Testis (tissue), 5 donors: ENCODE measurements at regions of chr4 and their contacts with region 1.

Region 1: DNA sequence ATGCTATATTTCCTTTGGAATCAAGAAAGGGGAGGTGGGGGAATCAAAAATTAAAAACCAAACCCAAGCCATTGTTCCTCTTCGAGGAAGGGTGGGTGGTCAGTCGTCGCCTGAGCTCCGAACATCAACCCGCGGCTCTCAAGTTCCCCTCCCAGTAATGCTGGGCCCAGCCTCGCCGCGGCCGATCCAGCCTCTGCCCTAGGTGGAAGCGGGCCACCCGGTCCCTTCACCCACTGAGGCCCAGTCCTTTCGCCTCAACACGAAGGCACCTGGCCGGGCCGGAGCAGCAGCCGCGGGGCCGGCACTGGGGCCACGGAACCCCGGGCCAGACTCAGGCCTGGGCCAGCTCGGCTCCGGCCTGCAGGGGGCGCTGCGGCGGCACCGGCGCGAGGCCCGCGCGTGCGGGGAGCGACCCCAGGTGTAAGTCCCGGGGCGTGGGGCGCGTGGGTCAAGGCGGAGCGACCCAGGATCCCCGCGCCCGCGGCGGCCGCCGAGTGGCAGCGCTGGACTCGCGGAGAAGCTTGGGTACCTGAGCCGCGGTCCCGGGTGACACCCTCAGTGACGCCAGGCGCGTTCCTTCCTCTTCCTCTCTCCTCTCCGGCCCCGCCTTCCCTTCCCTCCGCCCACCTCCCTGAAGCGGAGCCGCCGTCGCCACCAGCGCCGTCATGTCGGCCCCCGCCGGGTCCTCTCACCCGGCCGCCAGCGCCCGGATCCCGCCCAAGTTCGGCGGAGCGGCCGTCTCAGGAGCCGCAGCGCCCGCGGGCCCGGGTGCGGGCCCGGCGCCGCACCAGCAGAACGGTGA is at the start of gene SEC24B:
- DNase-seq: peak; percentile 93
- H3K4me3 ChIP-seq: peak within 1 kb of the TSS; percentile 68 to 83
- H3K27ac ChIP-seq: peak within 1 kb of the TSS; percentile 93 to 94
- H3K4me1 ChIP-seq: peaks cover 22% of the 10 kb centered on the region
- H3K27me3 ChIP-seq: no peaks in the 10 kb centered on the region
- CTCF ChIP-seq: peak; percentile 93 to 98 (median 94)
- POLR2A ChIP-seq: no peak
- total RNA-seq, gene SEC24B: 36.0 to 38.6 TPM

Region 2: DNA sequence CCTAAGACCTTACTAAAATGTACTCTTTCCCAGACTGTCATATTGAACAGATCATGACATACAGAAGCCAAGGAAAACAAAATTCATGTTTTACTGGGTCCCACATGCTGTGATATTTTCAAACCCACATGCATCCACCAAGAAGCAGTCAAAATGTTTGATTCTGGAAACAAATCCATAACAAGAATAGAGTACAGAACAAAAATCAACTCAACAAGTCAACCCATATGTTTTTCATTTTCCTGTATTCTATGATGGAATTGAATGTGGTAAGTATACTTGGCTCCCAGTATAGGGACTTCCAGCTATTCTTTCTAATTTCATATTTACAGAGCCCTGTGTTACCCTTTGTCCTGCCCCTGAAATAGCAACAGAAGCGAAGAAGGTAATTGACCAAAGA is 237.8 kb before region 1 on chr4:
- intact Hi-C with region 1: no loop called
- DNase-seq: no peak
- H3K4me3 ChIP-seq: no peak overlapping the region
- H3K27ac ChIP-seq: no peak overlapping the region
- H3K4me1 ChIP-seq: no peaks in the 10 kb centered on the region
- H3K27me3 ChIP-seq: no peaks in the 10 kb centered on the region
- CTCF ChIP-seq: no peak
- POLR2A ChIP-seq: no peak

Region 3: GRCh38 chr4:109559983-109560686 is 126.7 kb after region 1 on chr4 and contains the start of gene MCUB:
- intact Hi-C with region 1: loop called (anchors 10 kb)
- DNase-seq: peak; percentile 85
- H3K4me3 ChIP-seq: peak within 1 kb of the TSS; percentile 67 to 68
- H3K27ac ChIP-seq: peak within 1 kb of the TSS; percentile 59 to 85
- H3K4me1 ChIP-seq: no peaks in the 10 kb centered on the region
- H3K27me3 ChIP-seq: no peaks in the 10 kb centered on the region
- CTCF ChIP-seq: no peak
- POLR2A ChIP-seq: no peak
- total RNA-seq, gene MCUB: 20.1 to 23.4 TPM

Region 4: DNA sequence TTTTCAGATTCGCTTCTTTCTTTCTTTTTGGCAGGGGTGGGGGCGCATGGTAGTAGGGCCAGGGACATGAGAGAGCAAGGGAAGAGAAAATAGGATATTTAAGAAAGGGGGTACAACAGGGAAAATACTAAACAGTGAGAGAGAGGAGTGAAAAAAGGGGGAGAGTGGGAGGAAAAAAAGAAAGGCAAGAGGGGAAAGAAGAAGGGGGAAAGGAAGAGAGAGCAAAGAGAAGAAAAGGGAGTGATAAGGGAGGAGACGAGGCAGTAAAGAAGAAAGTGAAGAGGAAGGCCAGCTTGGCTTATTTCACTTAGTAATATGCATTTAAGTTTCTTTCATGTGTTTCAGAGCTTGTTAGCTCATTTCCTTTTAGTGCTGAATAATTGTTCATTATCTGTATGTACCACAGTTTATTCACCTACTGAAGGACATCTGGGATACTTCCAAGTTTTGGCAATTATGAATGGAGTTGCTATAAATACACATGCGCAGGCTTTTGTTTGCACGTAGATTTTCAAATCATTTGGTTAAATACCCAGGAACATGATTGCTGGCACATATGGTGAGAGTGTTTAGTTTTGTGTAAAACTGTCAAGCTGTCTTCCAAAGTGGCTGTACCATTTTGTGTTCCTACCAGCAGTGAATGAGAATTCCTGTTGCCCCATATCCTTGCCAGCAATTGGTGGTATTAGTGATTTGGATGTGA is 232.5 kb after region 1 on chr4:
- intact Hi-C with region 1: no loop called
- DNase-seq: no peak
- H3K4me3 ChIP-seq: no peak overlapping the region
- H3K27ac ChIP-seq: no peak overlapping the region
- H3K4me1 ChIP-seq: no peaks in the 10 kb centered on the region
- H3K27me3 ChIP-seq: no peaks in the 10 kb centered on the region
- CTCF ChIP-seq: no peak
- POLR2A ChIP-seq: no peak